Posterior cingulate gyrus (tissue), 11 donors: ENCODE measurements at regions of chr4 and their contacts with region 1.

Region 1: DNA sequence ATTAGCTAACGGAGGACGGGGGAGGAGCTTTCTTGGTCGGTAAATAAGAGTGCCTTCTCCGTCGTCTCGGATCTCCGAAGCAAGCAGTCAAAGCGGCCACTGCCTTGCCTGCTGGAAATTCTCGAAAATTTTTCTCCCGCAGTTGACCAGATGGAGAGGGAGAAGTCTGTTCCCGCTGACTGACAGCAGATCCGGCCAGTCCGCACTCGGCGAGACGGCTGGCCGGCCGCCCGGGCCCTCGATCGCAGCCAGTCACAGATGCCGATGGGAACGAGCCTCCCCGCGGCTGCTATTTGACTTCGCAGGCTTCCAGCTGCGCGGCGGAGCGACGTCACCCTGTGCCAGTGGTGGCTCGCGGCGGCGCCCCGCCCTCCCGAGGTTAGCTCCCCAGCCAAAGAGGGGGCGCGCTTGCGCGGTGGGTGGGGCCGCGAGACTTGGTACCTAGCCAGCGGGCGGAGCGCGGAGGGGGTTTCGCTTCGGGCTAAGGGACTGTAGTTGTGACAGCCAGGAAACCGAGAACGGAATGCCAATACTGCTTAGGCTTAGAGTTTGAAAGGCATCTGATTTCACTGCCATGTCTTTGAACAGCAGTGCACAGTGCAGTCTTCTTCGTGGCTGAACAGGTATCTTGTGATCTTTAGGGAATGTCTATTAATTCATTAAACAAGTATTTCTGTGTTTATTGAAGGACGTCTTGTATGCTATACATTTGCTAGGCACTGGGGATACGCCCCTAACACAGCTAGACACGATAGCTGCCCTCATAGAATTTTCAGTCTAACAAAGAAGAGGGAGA is at the start of gene PPM1K:
- DNase-seq: peak; percentile 98 to 100 (median 99)

Region 2: DNA sequence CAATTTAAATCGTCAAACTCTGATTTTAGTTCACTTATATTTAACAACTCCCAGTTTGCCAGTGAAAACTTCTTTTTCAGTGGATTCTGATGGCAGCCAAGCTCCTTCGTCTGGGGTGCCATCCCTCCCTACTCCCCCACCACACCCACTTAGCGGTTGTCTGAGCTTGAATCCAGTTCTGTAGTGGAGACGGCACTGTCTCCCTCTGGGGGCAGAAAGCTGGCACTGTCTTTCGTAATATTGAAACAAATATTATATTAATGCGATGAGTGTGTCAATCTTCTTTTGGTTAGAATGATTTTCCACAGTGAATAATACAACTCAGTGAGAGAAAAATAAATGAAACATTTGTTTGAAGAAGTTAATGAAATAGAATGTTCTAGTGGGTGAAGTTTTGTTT is 446.4 kb before region 1 on chr4:
- intact Hi-C with region 1: no loop called
- DNase-seq: peak in 2 of 10 donors; percentile 16 to 79

Region 3: DNA sequence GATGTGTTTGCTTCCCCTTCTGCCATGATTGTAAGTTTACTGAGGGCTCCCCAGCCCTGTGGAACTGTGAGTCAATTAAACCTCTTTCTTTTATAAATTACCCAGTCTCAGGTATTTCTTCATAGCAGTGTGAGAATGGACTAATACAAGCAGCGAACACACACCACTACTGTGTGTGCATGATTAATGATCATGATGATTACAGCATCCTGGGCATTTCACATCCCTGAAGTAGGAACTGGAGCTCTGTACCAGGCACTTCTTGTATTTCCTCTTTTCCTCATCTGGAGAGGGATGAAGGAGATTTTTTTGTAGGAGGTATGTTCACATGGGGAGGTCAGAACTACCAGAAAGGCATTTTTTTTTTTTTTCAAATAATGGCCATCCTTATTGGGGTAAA is 61.1 kb before region 1 on chr4:
- intact Hi-C with region 1: loop called (anchors 5 kb)
- DNase-seq: no peak

Region 4: GRCh38 chr4:88378691-88379559 is 94.3 kb after region 1 on chr4 and contains the start of gene HERC6:
- intact Hi-C with region 1: loop called (anchors 1 kb)
- DNase-seq: peak; percentile 61 to 96 (median 76)

Region 5: GRCh38 chr4:88456757-88457306 is 172.2 kb after region 1 on chr4 and contains the start of gene HERC5:
- intact Hi-C with region 1: loop called (anchors 5 kb)
- DNase-seq: peak; percentile 52 to 96 (median 72)

Region 6: GRCh38 chr4:88477229-88477860 is 192.7 kb after region 1 on chr4:
- intact Hi-C with region 1: no loop called
- DNase-seq: no peak

Region 7: DNA sequence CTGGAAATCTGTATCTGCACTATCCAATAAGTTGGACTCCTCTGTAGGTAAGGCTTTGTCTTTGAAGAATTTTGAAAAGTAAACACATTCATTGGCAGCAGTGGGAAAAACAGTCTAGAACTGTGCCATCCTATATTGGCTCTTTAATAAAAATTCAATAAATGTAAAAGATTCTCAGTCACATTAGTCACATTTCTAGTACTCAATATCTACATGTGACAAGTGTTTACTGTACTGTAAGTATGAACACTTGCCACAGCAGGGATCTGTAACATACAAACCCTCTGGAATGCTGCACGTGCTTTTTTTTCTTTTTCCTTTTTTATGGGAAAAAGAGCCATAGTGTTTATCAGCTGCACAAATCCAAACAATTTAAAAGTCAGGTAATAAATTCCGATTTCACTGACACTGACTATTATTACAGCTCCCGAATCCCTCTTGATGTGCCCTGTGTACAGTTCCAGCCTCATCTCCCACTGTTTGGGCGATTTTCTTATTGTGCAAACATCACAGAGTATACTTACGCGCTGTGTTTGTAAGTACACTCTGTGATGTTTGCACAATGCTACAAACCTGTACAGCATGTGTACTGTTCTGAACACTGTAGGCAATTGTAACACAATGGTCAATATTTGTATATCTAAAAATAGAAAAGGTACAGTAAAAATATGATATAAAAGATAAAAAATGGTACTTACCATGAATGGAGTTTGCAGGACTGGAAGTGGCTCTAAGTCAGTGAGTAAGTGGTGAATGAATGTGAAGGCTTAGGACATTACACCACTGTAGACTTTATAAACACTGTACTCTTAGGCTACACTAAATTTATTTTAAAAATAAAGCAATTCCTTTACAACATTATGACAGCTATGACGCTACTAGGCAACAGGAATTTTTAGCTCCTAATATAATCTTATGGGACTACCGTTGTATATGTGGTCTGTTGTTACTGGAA is 230.2 kb after region 1 on chr4:
- intact Hi-C with region 1: loop called (anchors 5 kb)
- DNase-seq: no peak

Region 8: DNA sequence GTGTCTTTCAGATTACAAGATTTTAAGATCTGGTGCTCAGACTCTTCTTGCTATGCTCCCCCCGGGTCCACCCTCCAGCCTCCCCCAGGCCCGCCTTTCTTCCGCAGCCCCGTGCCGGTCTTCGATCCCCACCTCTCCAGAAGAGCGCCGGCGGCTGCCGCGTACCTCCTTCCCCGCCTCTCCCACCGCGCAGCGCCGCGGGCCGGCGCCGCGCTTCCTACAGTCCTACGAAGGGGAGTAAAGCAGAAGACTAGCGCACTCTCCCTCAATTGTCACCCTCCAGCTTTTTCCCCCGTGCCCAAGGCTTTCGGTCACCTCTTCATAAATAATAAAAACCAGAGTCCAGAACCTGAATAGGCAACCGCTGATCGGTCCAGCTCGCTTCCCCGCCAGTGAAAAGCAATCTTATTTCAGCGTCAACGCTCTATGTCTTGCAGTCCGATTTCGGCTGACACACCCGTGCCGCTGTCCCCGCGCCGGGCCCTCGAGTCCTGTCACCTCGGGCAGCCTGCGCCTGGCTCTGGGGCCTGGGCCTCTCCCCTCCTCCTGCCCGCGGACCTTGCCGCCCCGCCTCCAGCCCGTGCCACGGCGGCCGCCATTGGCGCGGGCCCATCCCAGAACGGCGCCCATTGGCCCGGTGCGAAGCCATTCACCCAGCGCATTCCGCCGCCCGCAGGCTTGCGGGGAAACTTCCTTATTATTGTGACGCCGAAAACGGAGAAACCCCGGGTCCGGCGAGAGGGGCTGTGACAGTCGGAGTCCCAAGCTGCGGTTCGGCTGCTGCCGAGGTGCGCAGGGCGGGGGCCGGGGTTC is 307.4 kb after region 1 on chr4 and contains the start of gene HERC3:
- intact Hi-C with region 1: loop called (anchors 5 kb)
- DNase-seq: peak; percentile 88 to 99 (median 93)